Mammary epithelial cell (primary cell): ENCODE measurements at regions of chr11 and their contacts with region 1.

Region 1: DNA sequence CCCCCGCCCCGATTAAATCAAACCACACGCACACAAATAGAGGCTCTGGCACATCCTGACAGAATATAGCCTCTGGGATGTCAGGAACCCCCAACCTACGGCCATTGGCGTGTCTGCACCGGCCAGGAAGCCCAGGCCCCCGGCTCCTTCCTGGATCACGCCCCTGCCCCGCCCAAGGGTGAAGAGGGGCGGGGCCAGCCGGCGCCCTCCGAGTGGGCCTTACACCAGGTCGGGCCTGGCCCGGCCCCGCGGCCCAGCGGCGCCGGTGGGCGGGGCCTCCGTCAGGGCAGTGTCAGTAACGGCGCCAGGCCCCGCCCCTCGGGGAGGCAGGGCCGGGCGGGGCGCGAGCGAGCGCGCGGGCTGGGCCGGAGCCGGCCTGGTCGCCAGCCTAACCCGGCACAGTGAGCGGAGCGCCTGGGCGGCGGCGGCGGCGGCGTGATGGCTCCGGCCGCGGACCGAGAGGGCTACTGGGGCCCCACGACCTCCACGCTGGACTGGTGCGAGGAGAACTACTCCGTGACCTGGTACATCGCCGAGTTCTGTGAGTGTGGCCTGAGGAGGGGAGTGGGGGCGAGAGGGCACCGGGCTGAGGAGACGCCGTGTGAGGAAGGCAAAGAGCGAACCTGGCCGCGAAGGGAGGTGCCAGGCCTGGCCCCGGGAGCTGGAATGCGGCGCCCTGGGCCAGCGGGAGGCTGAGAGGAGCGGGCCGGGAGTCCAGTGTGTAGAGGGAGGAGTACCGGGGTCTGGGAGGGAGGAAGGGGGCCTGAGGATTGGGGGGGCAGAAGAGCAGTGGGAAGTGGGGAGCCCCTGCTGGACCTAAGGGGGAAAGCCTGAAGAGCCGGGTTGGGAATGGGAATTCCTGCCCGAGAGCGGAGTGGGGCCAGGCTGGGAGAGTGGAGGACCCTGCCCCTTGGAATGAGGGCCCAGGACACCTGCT is at the start of gene ACER3:
- DNase-seq: peak; percentile 87
- H3K4me3 ChIP-seq: peak within 1 kb of the TSS; percentile 54 to 84 (median 74)
- H3K27ac ChIP-seq: peak within 1 kb of the TSS; percentile 51
- H3K4me1 ChIP-seq: peaks cover 10% of the 10 kb centered on the region
- H3K27me3 ChIP-seq: no peaks in the 10 kb centered on the region
- CTCF ChIP-seq: peak in 1 of 2 donors; percentile 39
- total RNA-seq, gene ACER3: 21.8 to 46.0 TPM

Region 2: GRCh38 chr11:76680518-76681425 is 180.0 kb before region 1 on chr11:
- CTCF ChIA-PET with region 1: no interaction called
- dilution Hi-C with region 1: no loop called
- in situ Hi-C with region 1: no loop called
- intact Hi-C with region 1: no loop called
- DNase-seq: peak; percentile 25
- H3K4me3 ChIP-seq: no peak overlapping the region
- H3K27ac ChIP-seq: no peak overlapping the region
- H3K4me1 ChIP-seq: no peaks in the 10 kb centered on the region
- H3K27me3 ChIP-seq: no peaks in the 10 kb centered on the region
- CTCF ChIP-seq: peak; percentile 58 to 89

Region 3: DNA sequence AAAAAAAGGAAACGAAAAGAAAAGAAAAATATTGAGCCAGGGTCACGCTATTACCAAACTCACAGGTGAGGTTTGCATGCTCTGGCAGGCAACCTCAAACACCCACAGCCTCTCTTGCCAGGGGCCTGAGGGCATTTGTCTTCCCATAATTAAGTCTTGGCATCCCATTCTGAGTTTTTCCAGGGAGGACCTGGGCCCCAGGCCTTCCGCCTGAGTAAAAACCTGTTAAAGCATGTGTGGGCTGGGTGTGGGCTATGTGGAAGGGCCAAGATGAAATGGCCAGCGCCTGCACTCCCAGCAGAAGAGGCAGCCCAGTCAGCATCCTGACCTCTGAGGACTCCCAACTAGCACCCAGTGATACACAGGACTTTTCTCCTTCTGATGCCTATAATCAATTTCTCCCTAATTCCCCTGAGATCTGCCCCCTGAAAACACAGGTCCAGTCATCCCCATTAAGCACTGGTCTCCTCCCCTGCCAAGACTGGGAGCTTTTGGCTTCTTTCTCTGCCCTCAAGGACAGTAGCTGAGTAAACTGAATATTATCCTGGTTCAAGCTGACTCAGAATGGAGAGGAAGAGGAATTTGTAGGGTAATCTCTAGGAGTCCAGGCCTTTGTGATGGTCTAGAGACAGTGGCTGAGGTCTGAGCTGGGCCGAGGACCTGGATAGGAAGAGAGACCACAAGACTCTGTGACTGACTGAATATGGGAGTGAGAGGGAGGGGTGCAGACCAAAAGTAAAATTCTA is 35.7 kb before region 1 on chr11:
- CTCF ChIA-PET with region 1: no interaction called
- dilution Hi-C with region 1: no loop called
- in situ Hi-C with region 1: no loop called
- intact Hi-C with region 1: loop called (anchors 1 kb)
- DNase-seq: peak; percentile 93
- H3K4me3 ChIP-seq: no peak overlapping the region
- H3K27ac ChIP-seq: peak overlapping the region; percentile 52
- H3K4me1 ChIP-seq: peaks cover 36% of the 10 kb centered on the region
- H3K27me3 ChIP-seq: no peaks in the 10 kb centered on the region
- CTCF ChIP-seq: no peak

Region 4: DNA sequence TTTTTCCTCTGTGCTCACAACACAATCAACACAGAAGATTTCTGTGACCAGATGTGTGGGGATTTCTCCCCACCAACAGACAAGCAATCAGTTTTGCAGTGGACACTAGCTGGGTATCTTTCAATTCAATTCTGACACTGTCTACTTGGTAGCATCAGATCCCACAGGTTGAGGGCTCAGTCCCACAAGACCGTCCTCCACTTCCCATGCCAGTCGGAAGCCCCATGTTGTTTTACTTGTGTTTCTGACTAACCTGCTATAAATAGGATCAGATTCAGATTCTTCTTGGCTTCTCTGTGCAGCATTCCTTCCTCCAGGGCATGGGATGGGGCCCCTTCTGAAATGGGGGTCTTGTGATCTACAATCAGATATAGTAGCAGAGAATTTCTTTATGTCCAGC is 19.5 kb after region 1 on chr11:
- CTCF ChIA-PET with region 1: no interaction called
- dilution Hi-C with region 1: no loop called
- in situ Hi-C with region 1: no loop called
- intact Hi-C with region 1: loop called (anchors 2 kb)
- DNase-seq: no peak
- H3K4me3 ChIP-seq: no peak overlapping the region
- H3K27ac ChIP-seq: no peak overlapping the region
- H3K4me1 ChIP-seq: peaks cover 13% of the 10 kb centered on the region
- H3K27me3 ChIP-seq: no peaks in the 10 kb centered on the region
- CTCF ChIP-seq: no peak